CD8-positive, alpha-beta T cell (primary cell): ENCODE measurements at regions of chr6 and their contacts with region 1.

Region 1: DNA sequence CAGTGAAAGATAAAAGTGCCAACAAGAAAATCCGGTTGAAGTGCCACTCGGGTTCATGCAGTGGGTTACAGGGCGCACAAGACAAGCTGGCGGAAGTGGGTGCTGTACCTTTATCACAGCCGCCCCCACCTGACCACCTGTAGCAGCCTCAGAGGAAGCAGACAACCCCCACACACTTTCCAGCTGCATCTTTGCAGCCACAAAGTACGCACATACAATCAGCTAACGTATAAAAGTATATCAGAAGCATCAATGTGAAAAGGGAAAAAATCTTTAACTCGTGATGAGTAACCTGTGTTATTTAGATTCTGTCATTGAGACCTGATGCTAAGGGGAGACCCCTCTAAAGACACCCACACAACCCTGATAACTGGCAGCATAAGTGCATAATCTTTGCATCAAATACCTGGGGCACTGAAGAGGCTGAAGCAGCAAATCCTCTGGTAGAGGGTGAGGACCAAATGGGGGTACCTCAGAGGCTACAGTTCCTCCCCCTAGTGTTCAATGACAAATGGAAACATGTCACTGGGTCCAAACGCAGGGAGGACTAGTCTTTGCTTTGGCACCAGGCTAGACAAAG is 22.1 kb downstream of the BACH2 start:
- DNase-seq: peak; percentile 80 to 98 (median 86)
- ATAC-seq: peak; percentile 86
- H3K4me3 ChIP-seq: peak overlapping the region in 1 of 2 experiments; percentile 10
- H3K4me3 Mint-ChIP-seq: peak overlapping the region; percentile 74
- H3K27ac ChIP-seq: peak overlapping the region; percentile 67 to 90
- H3K27ac Mint-ChIP-seq: peak overlapping the region; percentile 98
- H3K4me1 ChIP-seq: peaks cover 87% of the 10 kb centered on the region
- H3K4me1 Mint-ChIP-seq: peaks cover 90% of the 10 kb centered on the region
- H3K27me3 ChIP-seq: no peaks in the 10 kb centered on the region
- H3K27me3 Mint-ChIP-seq: no peaks in the 10 kb centered on the region
- CTCF ChIP-seq: peak; percentile 47

Region 2: DNA sequence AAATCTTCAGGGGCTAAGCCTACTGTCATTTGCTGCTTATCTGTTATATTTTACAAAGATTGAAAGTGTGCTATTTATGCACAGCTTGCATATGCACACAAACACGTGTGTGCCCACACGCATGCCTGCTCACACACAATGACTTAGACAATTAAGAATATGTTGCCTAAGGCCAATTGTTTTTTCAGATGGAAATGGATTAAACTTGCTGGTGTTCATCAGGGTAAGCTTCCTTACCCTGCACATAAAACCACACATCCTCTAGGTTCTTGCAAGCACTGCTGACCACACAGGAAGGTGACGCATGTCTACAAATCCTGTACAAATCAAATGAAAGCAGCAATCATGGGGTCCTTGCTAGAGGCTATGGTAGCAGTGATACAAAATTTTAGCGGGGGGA is 321.9 kb before region 1 on chr6:
- CTCF ChIA-PET with region 1: no interaction called
- POLR2A ChIA-PET with region 1: no interaction called
- intact Hi-C with region 1: loop called in 1 of 2 experiments (anchors 1 kb)
- DNase-seq: peak; percentile 36 to 92 (median 65)
- ATAC-seq: peak; percentile 84
- H3K4me3 ChIP-seq: no peak overlapping the region
- H3K4me3 Mint-ChIP-seq: peak overlapping the region; percentile 71
- H3K27ac ChIP-seq: peak overlapping the region; percentile 24 to 47
- H3K27ac Mint-ChIP-seq: peak overlapping the region; percentile 94
- H3K4me1 ChIP-seq: peaks cover 55% of the 10 kb centered on the region
- H3K4me1 Mint-ChIP-seq: peaks cover 70% of the 10 kb centered on the region
- H3K27me3 ChIP-seq: no peaks in the 10 kb centered on the region
- H3K27me3 Mint-ChIP-seq: no peaks in the 10 kb centered on the region
- CTCF ChIP-seq: no peak

Region 3: GRCh38 chr6:90184334-90185298 is 89.9 kb before region 1 on chr6:
- CTCF ChIA-PET with region 1: interaction called, 3 read pairs
- POLR2A ChIA-PET with region 1: interaction called, 3 read pairs
- intact Hi-C with region 1: loop called in 1 of 2 experiments (anchors 5 kb)
- DNase-seq: peak in 4 of 9 experiments; percentile 22 to 66 (median 30)
- ATAC-seq: peak; percentile 19
- H3K4me3 ChIP-seq: no peak overlapping the region
- H3K4me3 Mint-ChIP-seq: peak overlapping the region; percentile 66
- H3K27ac ChIP-seq: peak overlapping the region in 1 of 2 experiments; percentile 34
- H3K27ac Mint-ChIP-seq: peak overlapping the region; percentile 98
- H3K4me1 ChIP-seq: peaks cover 70% of the 10 kb centered on the region
- H3K4me1 Mint-ChIP-seq: peaks cover 78% of the 10 kb centered on the region
- H3K27me3 ChIP-seq: no peaks in the 10 kb centered on the region
- H3K27me3 Mint-ChIP-seq: no peaks in the 10 kb centered on the region
- CTCF ChIP-seq: no peak

Region 4: DNA sequence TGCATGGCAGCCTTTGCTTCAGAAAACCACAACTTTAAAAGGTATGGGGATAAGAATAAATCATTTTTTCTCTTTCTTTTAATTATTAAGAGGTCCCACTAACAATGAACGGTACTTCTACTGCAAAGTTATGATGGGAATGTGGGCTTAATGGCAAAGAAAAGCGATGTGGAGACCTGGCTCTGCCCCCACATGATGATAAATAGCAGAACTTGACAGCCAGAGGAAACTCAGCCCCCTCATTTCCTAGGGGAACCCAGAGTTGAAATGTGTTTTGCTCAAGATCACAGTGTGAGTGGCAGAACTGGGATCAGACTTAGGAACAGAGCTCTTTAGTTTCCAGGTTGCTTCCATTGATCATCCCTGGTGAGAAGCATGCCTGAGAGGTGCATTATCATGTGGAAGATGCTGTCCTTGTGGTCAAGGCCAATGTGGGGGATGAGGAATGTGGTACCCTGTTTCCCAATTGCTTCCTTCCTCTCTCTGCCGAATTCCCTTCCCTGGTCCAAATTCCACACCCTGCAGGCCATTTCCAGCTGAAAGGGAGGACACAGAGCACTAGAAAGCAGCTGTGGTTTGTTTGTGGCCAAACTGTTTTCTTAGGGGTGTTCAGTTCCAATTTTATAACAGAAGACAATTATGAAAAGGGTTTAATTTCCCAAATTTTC is 43.9 kb before region 1 on chr6:
- CTCF ChIA-PET with region 1: interaction called, 8 read pairs
- POLR2A ChIA-PET with region 1: interaction called, 5 read pairs
- intact Hi-C with region 1: loop called (anchors 1 to 2 kb)
- DNase-seq: no peak
- ATAC-seq: no peak
- H3K4me3 ChIP-seq: no peak overlapping the region
- H3K4me3 Mint-ChIP-seq: peak overlapping the region; percentile 45
- H3K27ac ChIP-seq: peak overlapping the region in 1 of 2 experiments; percentile 32
- H3K27ac Mint-ChIP-seq: peak overlapping the region; percentile 95
- H3K4me1 ChIP-seq: peaks cover 95% of the 10 kb centered on the region
- H3K4me1 Mint-ChIP-seq: peaks cover 92% of the 10 kb centered on the region
- H3K27me3 ChIP-seq: no peaks in the 10 kb centered on the region
- H3K27me3 Mint-ChIP-seq: no peaks in the 10 kb centered on the region
- CTCF ChIP-seq: no peak

Region 5: DNA sequence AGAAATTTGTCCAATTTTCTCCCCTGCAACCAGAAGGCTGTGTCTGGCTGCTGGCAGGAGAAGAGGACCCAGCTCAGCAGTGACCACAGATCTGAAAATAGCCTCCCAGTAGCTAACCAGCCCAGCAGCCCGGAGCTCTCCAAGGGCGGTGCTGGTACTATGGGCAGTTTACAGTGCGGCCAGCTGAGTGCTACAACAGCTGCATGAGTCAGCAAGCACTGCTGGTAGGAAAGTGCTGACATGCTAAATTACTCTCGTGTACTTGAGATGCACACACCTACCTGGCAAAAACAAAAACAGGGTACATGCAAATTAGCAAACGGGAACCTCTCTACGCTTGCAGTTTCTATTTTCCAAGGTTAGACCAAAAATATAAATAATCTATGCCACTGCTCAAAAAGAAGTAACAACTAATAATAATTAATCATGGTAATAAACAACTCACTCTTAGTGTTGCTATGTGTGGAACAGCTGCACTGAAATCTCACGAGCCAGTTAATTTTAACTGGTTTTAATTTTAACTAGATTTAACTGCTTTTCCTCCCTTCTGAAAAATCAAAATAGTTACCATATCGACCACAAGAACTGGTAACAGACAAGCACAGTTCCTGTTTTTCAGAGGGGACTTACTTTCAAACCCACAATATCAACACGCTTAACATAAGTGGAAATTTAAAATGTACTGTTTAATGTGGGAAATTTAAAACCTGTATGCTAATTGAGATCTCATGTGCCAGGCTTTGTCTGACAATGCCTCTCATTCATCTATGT is 11.3 kb after region 1 on chr6:
- CTCF ChIA-PET with region 1: interaction called, 7 read pairs
- POLR2A ChIA-PET with region 1: interaction called, 31 read pairs
- intact Hi-C with region 1: loop called (anchors 1 kb)
- DNase-seq: peak in 5 of 9 experiments; percentile 46 to 77 (median 64)
- ATAC-seq: peak; percentile 46
- H3K4me3 ChIP-seq: peak overlapping the region; percentile 30 to 62
- H3K4me3 Mint-ChIP-seq: peak overlapping the region; percentile 83
- H3K27ac ChIP-seq: peak overlapping the region; percentile 1 to 74
- H3K27ac Mint-ChIP-seq: peak overlapping the region; percentile 93
- H3K4me1 ChIP-seq: peaks cover 93% of the 10 kb centered on the region
- H3K4me1 Mint-ChIP-seq: peaks cover 90% of the 10 kb centered on the region
- H3K27me3 ChIP-seq: no peaks in the 10 kb centered on the region
- H3K27me3 Mint-ChIP-seq: no peaks in the 10 kb centered on the region
- CTCF ChIP-seq: no peak